Mammary epithelial cell (primary cell): ENCODE measurements at regions of chr13 and their contacts with region 1.

Region 1: GRCh38 chr13:71477735-71478134 is 389.3 kb downstream of the DACH1 start:
- DNase-seq: no peak
- H3K4me3 ChIP-seq: no peak overlapping the region
- H3K27ac ChIP-seq: no peak overlapping the region
- H3K4me1 ChIP-seq: no peaks in the 10 kb centered on the region
- H3K27me3 ChIP-seq: peaks cover 2% of the 10 kb centered on the region
- CTCF ChIP-seq: peak; percentile 33 to 54

Region 2: GRCh38 chr13:71039440-71039839 is 438.3 kb before region 1 on chr13:
- CTCF ChIA-PET with region 1: no interaction called
- dilution Hi-C with region 1: no loop called
- in situ Hi-C with region 1: no loop called
- intact Hi-C with region 1: no loop called
- DNase-seq: no peak
- H3K4me3 ChIP-seq: no peak overlapping the region
- H3K27ac ChIP-seq: no peak overlapping the region
- H3K4me1 ChIP-seq: no peaks in the 10 kb centered on the region
- H3K27me3 ChIP-seq: no peaks in the 10 kb centered on the region
- CTCF ChIP-seq: no peak

Region 3: DNA sequence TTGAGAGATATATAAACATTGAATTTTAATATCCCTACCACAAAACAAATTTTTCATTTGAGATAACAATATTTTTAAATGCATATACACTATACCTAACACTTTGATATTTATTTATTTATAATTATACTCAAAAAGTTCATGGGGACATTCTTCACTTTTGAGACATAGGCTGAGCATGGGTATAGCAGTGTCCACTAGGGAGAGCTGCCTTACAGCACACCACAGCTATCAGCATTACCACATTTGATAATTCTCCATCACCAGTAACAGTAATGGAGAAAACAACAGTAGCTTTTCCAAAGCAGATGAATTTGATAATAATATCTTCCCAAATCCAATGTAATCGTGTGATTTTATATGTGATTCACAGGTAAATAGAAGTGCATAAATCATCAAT is 236.8 kb before region 1 on chr13:
- CTCF ChIA-PET with region 1: no interaction called
- dilution Hi-C with region 1: no loop called
- in situ Hi-C with region 1: no loop called
- intact Hi-C with region 1: loop called (anchors 1 kb)
- DNase-seq: no peak
- H3K4me3 ChIP-seq: no peak overlapping the region
- H3K27ac ChIP-seq: no peak overlapping the region
- H3K4me1 ChIP-seq: no peaks in the 10 kb centered on the region
- H3K27me3 ChIP-seq: no peaks in the 10 kb centered on the region
- CTCF ChIP-seq: peak; percentile 15 to 63

Region 4: GRCh38 chr13:71320452-71320851 is 157.3 kb before region 1 on chr13:
- CTCF ChIA-PET with region 1: no interaction called
- dilution Hi-C with region 1: no loop called
- in situ Hi-C with region 1: no loop called
- intact Hi-C with region 1: loop called (anchors 1 kb)
- DNase-seq: peak; percentile 7
- H3K4me3 ChIP-seq: no peak overlapping the region
- H3K27ac ChIP-seq: no peak overlapping the region
- H3K4me1 ChIP-seq: no peaks in the 10 kb centered on the region
- H3K27me3 ChIP-seq: peaks cover 3% of the 10 kb centered on the region
- CTCF ChIP-seq: peak; percentile 64 to 66